ENCODE measurements at regions of chr4 and their contacts with region 1.

Region 1: DNA sequence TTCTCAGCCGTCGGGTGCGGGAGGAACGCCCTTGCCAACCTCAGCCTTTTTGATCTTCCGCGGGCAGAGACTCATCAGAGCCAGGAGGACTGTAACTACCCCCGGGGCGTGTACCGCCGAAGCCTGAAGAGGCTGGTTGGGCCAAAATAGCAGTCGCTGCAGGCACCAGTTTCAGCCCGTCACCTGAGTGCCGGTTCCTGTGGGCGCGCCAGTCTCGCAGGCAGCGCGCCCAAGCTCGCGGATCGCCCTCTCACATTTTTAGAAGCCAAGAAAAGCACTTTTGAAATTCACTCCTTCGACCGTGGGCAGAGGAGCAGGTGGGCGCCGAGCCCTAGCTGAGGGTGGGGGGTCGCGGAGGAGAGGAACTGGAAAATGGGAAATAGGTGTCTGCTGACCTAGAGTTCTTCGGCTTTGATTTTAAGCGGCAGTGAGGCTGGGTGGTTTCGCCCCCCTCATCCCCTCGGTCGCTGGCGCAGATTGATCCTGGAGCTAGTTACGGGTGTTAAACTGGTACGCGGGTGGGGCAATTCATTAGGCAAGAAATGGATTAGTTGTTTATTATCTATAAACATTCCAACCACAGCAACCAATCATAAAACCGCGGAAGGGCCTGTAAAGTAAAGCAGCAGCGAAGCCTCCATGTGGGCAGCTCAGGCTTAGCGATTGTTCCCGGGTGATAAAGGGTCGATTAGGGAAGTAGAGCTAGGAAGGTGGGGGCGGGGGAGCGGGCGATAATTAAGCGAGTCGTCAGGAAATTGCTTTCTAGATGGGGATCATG is 69.2 kb downstream of the FBXO8 start:
- DNase-seq: no peak
- H3K4me3 ChIP-seq: peak overlapping the region in 1 of 3 experiments; percentile 20
- H3K4me3 Mint-ChIP-seq: peak overlapping the region; percentile 45 to 80
- H3K27ac ChIP-seq: no peak overlapping the region
- H3K27ac Mint-ChIP-seq: peak overlapping the region in 1 of 7 donors; percentile 1
- H3K4me1 ChIP-seq: peaks cover 8 to 12% of the 10 kb centered on the region in 2 donors
- H3K4me1 Mint-ChIP-seq: peaks cover 36% of the 10 kb centered on the region
- H3K27me3 ChIP-seq: peaks cover 97 to 98% of the 10 kb centered on the region in 2 donors
- H3K27me3 Mint-ChIP-seq: peaks cover 90 to 98% (median 95%) of the 10 kb centered on the region in 3 donors
- CTCF ChIP-seq: no peak

Region 2: DNA sequence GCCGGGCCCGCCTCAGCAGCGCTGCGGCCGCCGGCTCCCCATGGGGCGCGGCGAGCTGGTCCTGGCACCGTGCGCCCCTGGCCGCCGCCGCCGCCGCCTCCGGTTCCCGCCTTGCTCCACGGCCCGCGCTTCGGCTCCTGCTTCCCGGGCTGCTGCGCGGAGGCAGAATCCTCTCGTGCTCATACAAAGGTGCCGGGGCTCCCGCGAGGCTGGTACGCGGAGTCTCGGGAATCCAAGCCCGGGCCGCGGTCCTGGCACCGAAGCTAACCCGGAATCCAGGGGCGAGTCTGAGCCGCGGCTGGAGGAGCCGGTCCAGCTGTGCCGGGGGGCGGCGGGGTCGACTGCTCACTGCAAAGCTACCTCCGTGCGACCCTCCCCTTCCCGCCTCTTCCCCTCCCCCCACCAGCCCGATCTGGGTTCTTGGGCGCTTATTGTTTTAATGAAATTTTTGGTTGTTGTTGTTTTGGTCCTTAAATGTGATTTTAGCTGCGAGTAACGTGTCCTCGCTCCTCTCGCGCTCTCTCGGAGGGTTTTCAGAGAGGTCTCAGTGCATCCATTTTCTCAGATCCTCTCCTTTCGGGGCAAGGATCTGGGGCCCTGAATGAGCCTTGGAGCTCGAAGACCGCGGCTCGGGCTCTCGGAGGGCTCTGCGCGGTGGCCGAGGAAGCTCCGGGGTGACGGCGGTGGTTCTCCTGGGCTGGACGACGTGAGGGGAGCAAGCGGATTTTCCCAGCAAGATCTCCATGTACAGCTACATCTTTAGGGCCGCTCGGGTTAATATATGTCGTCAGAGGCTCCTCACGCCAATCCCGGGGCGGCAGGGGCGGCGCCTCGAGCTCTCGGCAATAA is 684.6 kb before region 1 on chr4 and contains the start of gene HAND2:
- intact Hi-C with region 1: loop called in 1 of 2 experiments (anchors 5 kb)
- DNase-seq: no peak
- H3K4me3 ChIP-seq: no peak within 1 kb of the TSS
- H3K4me3 Mint-ChIP-seq: peak within 1 kb of the TSS; percentile 43 to 88
- H3K27ac ChIP-seq: no peak within 1 kb of the TSS
- H3K27ac Mint-ChIP-seq: no peak within 1 kb of the TSS
- H3K4me1 ChIP-seq: peaks cover 7 to 17% of the 10 kb centered on the region in 2 donors
- H3K4me1 Mint-ChIP-seq: peaks cover 26% of the 10 kb centered on the region
- H3K27me3 ChIP-seq: peaks cover 91 to 94% of the 10 kb centered on the region in 2 donors
- H3K27me3 Mint-ChIP-seq: peaks cover 94 to 98% (median 96%) of the 10 kb centered on the region in 3 donors
- CTCF ChIP-seq: no peak
- polyA plus RNA-seq, gene HAND2: not detected

Region 3: DNA sequence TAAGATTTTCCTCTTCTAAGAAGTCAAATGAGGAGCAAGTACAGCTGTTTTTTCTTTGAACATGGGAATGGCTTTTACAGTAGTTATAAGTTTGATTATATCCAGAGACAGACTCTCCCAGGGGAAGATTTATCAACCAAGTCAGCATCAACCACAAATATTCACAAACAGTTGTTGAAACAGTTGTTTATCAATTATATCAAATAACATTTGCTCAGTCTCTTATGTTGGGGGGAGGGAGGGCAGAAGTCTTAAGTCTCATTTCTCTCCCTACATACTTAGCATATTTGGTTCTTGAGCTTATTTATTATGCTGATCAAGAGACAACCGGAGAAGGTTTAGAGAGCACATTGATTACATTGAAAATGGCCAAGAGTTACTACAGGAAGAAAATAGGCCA is 40.9 kb before region 1 on chr4:
- intact Hi-C with region 1: no loop called
- DNase-seq: no peak
- H3K4me3 ChIP-seq: no peak overlapping the region
- H3K4me3 Mint-ChIP-seq: no peak overlapping the region
- H3K27ac ChIP-seq: no peak overlapping the region
- H3K27ac Mint-ChIP-seq: no peak overlapping the region
- H3K4me1 ChIP-seq: no peaks in the 10 kb centered on the region
- H3K4me1 Mint-ChIP-seq: no peaks in the 10 kb centered on the region
- H3K27me3 ChIP-seq: peaks cover 0 to 4% of the 10 kb centered on the region in 2 donors
- H3K27me3 Mint-ChIP-seq: peaks cover 4 to 7% (median 7%) of the 10 kb centered on the region in 3 donors
- CTCF ChIP-seq: no peak

Region 4: GRCh38 chr4:174835536-174835935 is 621.2 kb after region 1 on chr4:
- intact Hi-C with region 1: no loop called
- DNase-seq: no peak
- H3K4me3 ChIP-seq: no peak overlapping the region
- H3K4me3 Mint-ChIP-seq: no peak overlapping the region
- H3K27ac ChIP-seq: no peak overlapping the region
- H3K27ac Mint-ChIP-seq: no peak overlapping the region
- H3K4me1 ChIP-seq: no peaks in the 10 kb centered on the region
- H3K4me1 Mint-ChIP-seq: no peaks in the 10 kb centered on the region
- H3K27me3 ChIP-seq: no peaks in the 10 kb centered on the region
- H3K27me3 Mint-ChIP-seq: peaks cover 0 to 2% (median 0%) of the 10 kb centered on the region in 3 donors
- CTCF ChIP-seq: no peak